CD4-positive, alpha-beta T cell (primary cell): ENCODE measurements at regions of chr1 and their contacts with region 1.

Region 1: GRCh38 chr1:147627435-147628110 is 42.8 kb downstream of the ACP6 start:
- DNase-seq: peak; percentile 23 to 74 (median 42)
- ATAC-seq: peak; percentile 72
- H3K4me3 ChIP-seq: no peak overlapping the region
- H3K4me3 Mint-ChIP-seq: no peak overlapping the region
- H3K27ac ChIP-seq: no peak overlapping the region
- H3K27ac Mint-ChIP-seq: no peak overlapping the region
- H3K4me1 ChIP-seq: peaks cover 26% of the 10 kb centered on the region
- H3K4me1 Mint-ChIP-seq: peaks cover 45% of the 10 kb centered on the region
- H3K27me3 ChIP-seq: no peaks in the 10 kb centered on the region
- H3K27me3 Mint-ChIP-seq: no peaks in the 10 kb centered on the region
- CTCF ChIP-seq: peak; percentile 97

Region 2: GRCh38 chr1:147185441-147185840 is 442.1 kb before region 1 on chr1:
- CTCF ChIA-PET with region 1: no interaction called
- POLR2A ChIA-PET with region 1: no interaction called
- intact Hi-C with region 1: no loop called
- DNase-seq: no peak
- ATAC-seq: no peak
- H3K4me3 ChIP-seq: no peak overlapping the region
- H3K4me3 Mint-ChIP-seq: no peak overlapping the region
- H3K27ac ChIP-seq: no peak overlapping the region
- H3K27ac Mint-ChIP-seq: no peak overlapping the region
- H3K4me1 ChIP-seq: no peaks in the 10 kb centered on the region
- H3K4me1 Mint-ChIP-seq: no peaks in the 10 kb centered on the region
- H3K27me3 ChIP-seq: no peaks in the 10 kb centered on the region
- H3K27me3 Mint-ChIP-seq: no peaks in the 10 kb centered on the region
- CTCF ChIP-seq: no peak

Region 3: GRCh38 chr1:147273409-147274336 is 353.9 kb before region 1 on chr1:
- CTCF ChIA-PET with region 1: no interaction called
- POLR2A ChIA-PET with region 1: no interaction called
- intact Hi-C with region 1: loop called in 1 of 2 experiments (anchors 5 kb)
- DNase-seq: peak in 6 of 14 experiments; percentile 0 to 71 (median 46)
- ATAC-seq: peak; percentile 68
- H3K4me3 ChIP-seq: no peak overlapping the region
- H3K4me3 Mint-ChIP-seq: no peak overlapping the region
- H3K27ac ChIP-seq: no peak overlapping the region
- H3K27ac Mint-ChIP-seq: no peak overlapping the region
- H3K4me1 ChIP-seq: no peaks in the 10 kb centered on the region
- H3K4me1 Mint-ChIP-seq: no peaks in the 10 kb centered on the region
- H3K27me3 ChIP-seq: no peaks in the 10 kb centered on the region
- H3K27me3 Mint-ChIP-seq: no peaks in the 10 kb centered on the region
- CTCF ChIP-seq: peak; percentile 76

Region 4: GRCh38 chr1:147494998-147495580 is 132.5 kb before region 1 on chr1:
- CTCF ChIA-PET with region 1: interaction called, 6 read pairs
- POLR2A ChIA-PET with region 1: interaction called, 3 read pairs
- intact Hi-C with region 1: loop called (anchors 1 kb)
- DNase-seq: peak; percentile 50 to 85 (median 64)
- ATAC-seq: peak; percentile 96
- H3K4me3 ChIP-seq: no peak overlapping the region
- H3K4me3 Mint-ChIP-seq: no peak overlapping the region
- H3K27ac ChIP-seq: no peak overlapping the region
- H3K27ac Mint-ChIP-seq: no peak overlapping the region
- H3K4me1 ChIP-seq: peaks cover 6% of the 10 kb centered on the region
- H3K4me1 Mint-ChIP-seq: no peaks in the 10 kb centered on the region
- H3K27me3 ChIP-seq: no peaks in the 10 kb centered on the region
- H3K27me3 Mint-ChIP-seq: peaks cover 12% of the 10 kb centered on the region
- CTCF ChIP-seq: peak; percentile 96

Region 5: GRCh38 chr1:147515046-147515869 is 112.3 kb before region 1 on chr1:
- CTCF ChIA-PET with region 1: interaction called, 7 read pairs
- POLR2A ChIA-PET with region 1: no interaction called
- intact Hi-C with region 1: loop called (anchors 1 kb)
- DNase-seq: peak in 4 of 14 experiments; percentile 34 to 55 (median 45)
- ATAC-seq: peak; percentile 70
- H3K4me3 ChIP-seq: no peak overlapping the region
- H3K4me3 Mint-ChIP-seq: no peak overlapping the region
- H3K27ac ChIP-seq: no peak overlapping the region
- H3K27ac Mint-ChIP-seq: no peak overlapping the region
- H3K4me1 ChIP-seq: no peaks in the 10 kb centered on the region
- H3K4me1 Mint-ChIP-seq: peaks cover 7% of the 10 kb centered on the region
- H3K27me3 ChIP-seq: no peaks in the 10 kb centered on the region
- H3K27me3 Mint-ChIP-seq: no peaks in the 10 kb centered on the region
- CTCF ChIP-seq: peak; percentile 67

Region 6: DNA sequence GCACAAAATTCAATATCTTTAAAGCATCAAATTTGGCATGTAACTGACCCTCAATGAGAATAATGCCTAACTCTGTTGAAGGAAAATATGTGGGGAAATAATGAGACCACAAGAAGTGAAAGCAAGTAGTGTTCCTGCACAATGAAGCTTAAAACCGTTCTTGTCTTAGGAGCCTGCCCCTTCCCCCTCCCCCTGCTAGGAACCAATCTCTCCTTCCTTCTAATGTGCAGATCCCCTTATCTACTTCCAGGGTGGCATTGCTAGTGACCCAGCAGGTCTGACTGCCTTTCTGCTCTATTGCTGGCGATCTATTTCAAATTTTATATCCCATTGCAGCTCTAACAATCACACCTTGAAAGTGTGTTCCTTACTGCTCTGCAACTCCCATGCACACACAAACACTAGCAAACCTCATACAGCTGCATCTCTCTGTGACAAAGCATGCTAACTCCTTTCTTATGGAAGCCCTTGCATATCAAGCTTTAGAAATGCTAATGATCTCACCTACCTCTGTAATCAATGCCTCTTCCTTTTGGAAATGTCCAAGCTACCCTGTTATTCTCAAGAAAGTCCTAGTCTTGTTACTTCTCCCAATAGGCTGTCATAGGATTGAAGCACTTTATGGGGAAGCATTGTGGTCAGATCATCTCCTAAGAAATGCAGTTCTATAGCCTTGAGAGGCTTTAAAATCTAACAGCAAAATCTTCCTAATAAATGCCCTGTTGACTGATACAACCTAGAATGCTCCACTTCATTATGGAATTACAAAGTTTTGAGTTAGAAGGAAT is 59.8 kb before region 1 on chr1:
- CTCF ChIA-PET with region 1: no interaction called
- POLR2A ChIA-PET with region 1: no interaction called
- intact Hi-C with region 1: no loop called
- DNase-seq: no peak
- ATAC-seq: no peak
- H3K4me3 ChIP-seq: no peak overlapping the region
- H3K4me3 Mint-ChIP-seq: no peak overlapping the region
- H3K27ac ChIP-seq: no peak overlapping the region
- H3K27ac Mint-ChIP-seq: no peak overlapping the region
- H3K4me1 ChIP-seq: no peaks in the 10 kb centered on the region
- H3K4me1 Mint-ChIP-seq: peaks cover 14% of the 10 kb centered on the region
- H3K27me3 ChIP-seq: no peaks in the 10 kb centered on the region
- H3K27me3 Mint-ChIP-seq: peaks cover 7% of the 10 kb centered on the region
- CTCF ChIP-seq: no peak

Region 7: DNA sequence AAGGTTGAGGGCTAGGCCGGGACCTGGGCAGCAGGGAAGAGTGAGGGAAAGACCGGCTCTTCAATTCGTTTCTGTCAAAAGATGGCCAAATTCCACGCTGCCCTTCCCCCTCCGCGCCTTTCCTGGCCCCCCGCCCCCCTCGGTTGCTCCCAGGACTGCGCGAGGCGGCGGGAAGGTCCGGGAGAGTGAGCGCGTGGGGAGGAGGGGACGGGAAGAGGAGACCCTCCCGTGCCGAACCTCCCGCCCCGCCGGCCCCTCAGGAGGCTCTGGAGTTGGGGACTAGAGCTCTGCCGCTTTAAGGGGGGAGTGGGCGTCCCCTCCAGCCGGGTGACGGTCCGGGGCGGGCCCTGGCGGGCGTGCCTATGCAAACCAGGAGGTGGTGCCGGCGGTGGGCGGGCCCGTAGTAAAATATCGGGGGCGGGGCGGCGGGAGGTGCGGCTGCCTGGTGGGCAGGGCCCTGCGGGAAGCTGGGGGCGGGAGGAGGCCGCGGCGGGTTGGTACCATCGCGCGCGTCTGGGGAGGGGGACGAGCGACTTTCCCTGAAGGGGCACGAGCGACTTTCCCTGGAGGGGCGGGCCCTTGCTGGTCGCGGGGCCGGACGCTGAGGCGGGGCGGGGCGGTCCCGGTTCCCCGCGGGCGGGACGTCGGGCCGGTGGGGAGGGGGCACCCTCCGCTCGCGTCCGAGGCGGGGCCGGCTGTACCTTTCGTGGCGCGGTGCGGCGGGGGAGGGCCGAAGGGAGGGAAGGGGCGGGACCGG is 28.0 kb before region 1 on chr1:
- CTCF ChIA-PET with region 1: interaction called, 3 read pairs
- POLR2A ChIA-PET with region 1: interaction called, 5 read pairs
- intact Hi-C with region 1: loop called in 1 of 2 experiments (anchors 2 kb)
- DNase-seq: peak; percentile 95 to 99 (median 97)
- ATAC-seq: peak; percentile 84
- H3K4me3 ChIP-seq: peak overlapping the region; percentile 91
- H3K4me3 Mint-ChIP-seq: peak overlapping the region; percentile 93
- H3K27ac ChIP-seq: peak overlapping the region in 1 of 2 donors; percentile 37
- H3K27ac Mint-ChIP-seq: peak overlapping the region; percentile 86
- H3K4me1 ChIP-seq: peaks cover 17% of the 10 kb centered on the region
- H3K4me1 Mint-ChIP-seq: peaks cover 33% of the 10 kb centered on the region
- H3K27me3 ChIP-seq: no peaks in the 10 kb centered on the region
- H3K27me3 Mint-ChIP-seq: no peaks in the 10 kb centered on the region
- CTCF ChIP-seq: no peak